Posterior vena cava (tissue), 2 donors: ENCODE measurements at regions of chr15 and their contacts with region 1.

Region 1: DNA sequence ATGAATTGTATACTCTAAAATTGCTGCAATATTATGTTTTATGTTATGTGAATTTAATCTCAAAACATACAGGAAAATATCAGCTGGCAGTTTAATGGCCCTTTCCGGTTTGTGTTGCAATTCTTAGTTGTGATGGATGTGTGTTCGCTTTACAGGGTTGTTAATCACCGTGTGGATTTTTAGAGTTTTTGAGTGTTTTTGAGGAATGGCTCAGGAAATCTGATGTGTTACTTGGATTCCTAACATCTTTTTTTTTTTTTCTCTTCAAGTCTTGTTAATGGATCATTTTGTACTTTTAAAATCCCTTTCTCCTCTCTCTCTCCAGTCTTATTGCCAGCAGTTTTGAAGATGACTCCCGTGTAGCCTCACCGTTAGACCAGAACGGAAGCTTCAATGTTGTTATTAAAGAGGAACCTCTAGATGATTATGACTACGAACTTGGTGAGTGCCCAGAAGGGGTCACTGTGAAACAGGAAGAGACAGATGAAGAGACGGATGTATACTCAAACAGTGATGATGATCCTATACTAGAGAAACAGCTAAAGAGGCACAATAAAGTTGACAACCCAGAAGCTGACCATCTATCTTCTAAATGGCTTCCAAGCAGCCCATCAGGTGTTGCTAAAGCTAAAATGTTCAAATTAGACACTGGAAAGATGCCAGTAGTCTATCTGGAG is 35.7 kb downstream of the MGA start:
- DNase-seq: no peak

Region 2: DNA sequence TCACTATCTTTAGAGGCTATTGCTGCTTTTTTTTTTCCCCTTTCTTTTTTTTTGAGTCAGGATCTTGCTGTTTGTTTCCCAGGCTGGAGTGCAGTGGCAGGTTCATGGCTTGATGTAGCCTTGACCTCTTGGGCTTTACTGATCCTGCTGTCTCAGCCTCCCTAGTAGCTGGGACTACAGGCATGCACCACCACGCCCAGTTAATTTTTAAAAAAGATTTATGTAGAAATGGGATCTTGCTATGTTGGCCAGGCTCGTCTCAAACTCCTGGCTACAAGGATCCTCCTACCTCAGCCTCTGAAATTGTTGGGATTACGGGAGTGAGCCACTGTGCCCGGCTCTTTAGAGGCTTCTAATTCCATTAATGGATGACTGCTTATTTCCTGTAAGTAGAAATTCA is 20.6 kb before region 1 on chr15:
- intact Hi-C with region 1: loop called in 1 of 2 experiments (anchors 2 kb)
- DNase-seq: no peak